Heart right ventricle (tissue), 16 donors: ENCODE measurements at regions of chr18 and their contacts with region 1.

Region 1: GRCh38 chr18:4797002-4797685 is 342.0 kb upstream of the DLGAP1 start:
- DNase-seq: no peak
- ATAC-seq: no peak
- H3K4me3 ChIP-seq: no peak overlapping the region
- H3K27ac ChIP-seq: no peak overlapping the region
- H3K4me1 ChIP-seq: no peaks in the 10 kb centered on the region
- H3K27me3 ChIP-seq: no peaks in the 10 kb centered on the region
- CTCF ChIP-seq: no peak

Region 2: GRCh38 chr18:4544134-4544533 is 253.0 kb before region 1 on chr18:
- intact Hi-C with region 1: no loop called
- DNase-seq: no peak
- ATAC-seq: no peak
- H3K4me3 ChIP-seq: no peak overlapping the region
- H3K27ac ChIP-seq: no peak overlapping the region
- H3K4me1 ChIP-seq: no peaks in the 10 kb centered on the region
- H3K27me3 ChIP-seq: no peaks in the 10 kb centered on the region
- CTCF ChIP-seq: no peak

Region 3: GRCh38 chr18:4734903-4735302 is 62.2 kb before region 1 on chr18:
- intact Hi-C with region 1: loop called in 1 of 10 experiments (anchors 10 kb)
- DNase-seq: no peak
- ATAC-seq: no peak
- H3K4me3 ChIP-seq: no peak overlapping the region
- H3K27ac ChIP-seq: no peak overlapping the region
- H3K4me1 ChIP-seq: no peaks in the 10 kb centered on the region
- H3K27me3 ChIP-seq: no peaks in the 10 kb centered on the region
- CTCF ChIP-seq: no peak